ENCODE measurements at regions of chr12 and their contacts with region 1.

Region 1: DNA sequence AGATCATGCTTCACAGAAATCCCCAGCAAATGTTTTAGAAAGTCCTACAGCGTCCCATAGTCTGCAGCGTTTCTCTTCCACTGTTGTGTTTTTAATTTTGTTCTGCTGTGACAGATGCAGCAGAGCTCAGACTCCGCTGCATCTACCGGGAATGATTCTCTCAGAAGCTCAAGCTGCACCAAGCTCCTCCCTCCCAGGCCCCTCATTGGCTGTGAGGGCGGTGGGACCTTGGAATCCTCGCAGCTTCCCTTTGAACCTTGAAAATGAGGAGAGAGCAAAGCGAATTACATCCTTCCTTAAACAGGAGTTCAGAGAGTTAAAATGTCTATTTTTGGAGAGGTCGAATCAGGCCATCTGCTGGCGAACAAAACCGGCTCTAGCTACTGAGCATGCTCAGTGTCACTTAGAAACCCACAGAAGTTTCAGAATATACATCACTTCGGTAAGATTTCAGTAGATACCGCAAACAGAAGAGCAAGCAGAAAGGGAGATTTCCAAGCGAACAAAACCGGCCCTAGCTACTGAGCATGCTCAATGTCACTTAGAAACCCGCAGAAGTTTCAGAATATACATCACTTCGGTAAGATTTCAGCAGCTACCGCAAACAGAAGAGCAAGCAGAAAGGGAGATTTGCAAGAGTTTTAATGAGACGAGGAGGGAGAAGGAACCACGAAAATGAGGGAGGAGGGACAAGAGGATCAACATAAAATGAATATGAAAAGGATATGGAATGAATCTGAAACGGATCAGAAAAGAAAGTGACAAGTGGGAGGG is at the start of gene ABCD2:
- DNase-seq: peak; percentile 45 to 94 (median 61)
- ATAC-seq: peak; percentile 84
- H3K4me3 ChIP-seq: peak within 1 kb of the TSS; percentile 68
- H3K4me3 Mint-ChIP-seq: no peak within 1 kb of the TSS
- H3K27ac ChIP-seq: peak within 1 kb of the TSS; percentile 74 to 89
- H3K27ac Mint-ChIP-seq: no peak within 1 kb of the TSS
- H3K4me1 ChIP-seq: peaks cover 22% of the 10 kb centered on the region
- H3K4me1 Mint-ChIP-seq: peaks cover 35% of the 10 kb centered on the region
- H3K27me3 ChIP-seq: no peaks in the 10 kb centered on the region
- H3K27me3 Mint-ChIP-seq: no peaks in the 10 kb centered on the region
- CTCF ChIP-seq: no peak
- total RNA-seq, gene ABCD2: 1.6 to 2.2 TPM

Region 2: GRCh38 chr12:39510001-39510400 is 109.8 kb before region 1 on chr12:
- CTCF ChIA-PET with region 1: no interaction called
- POLR2A ChIA-PET with region 1: no interaction called
- intact Hi-C with region 1: no loop called
- DNase-seq: no peak
- ATAC-seq: no peak
- H3K4me3 ChIP-seq: no peak overlapping the region
- H3K4me3 Mint-ChIP-seq: no peak overlapping the region
- H3K27ac ChIP-seq: no peak overlapping the region
- H3K27ac Mint-ChIP-seq: no peak overlapping the region
- H3K4me1 ChIP-seq: no peaks in the 10 kb centered on the region
- H3K4me1 Mint-ChIP-seq: no peaks in the 10 kb centered on the region
- H3K27me3 ChIP-seq: no peaks in the 10 kb centered on the region
- H3K27me3 Mint-ChIP-seq: no peaks in the 10 kb centered on the region
- CTCF ChIP-seq: no peak

Region 3: GRCh38 chr12:39638178-39638577 is 18.3 kb after region 1 on chr12:
- CTCF ChIA-PET with region 1: interaction called, 5 read pairs
- POLR2A ChIA-PET with region 1: interaction called, 13 read pairs
- intact Hi-C with region 1: no loop called
- DNase-seq: no peak
- ATAC-seq: no peak
- H3K4me3 ChIP-seq: no peak overlapping the region
- H3K4me3 Mint-ChIP-seq: no peak overlapping the region
- H3K27ac ChIP-seq: no peak overlapping the region
- H3K27ac Mint-ChIP-seq: no peak overlapping the region
- H3K4me1 ChIP-seq: no peaks in the 10 kb centered on the region
- H3K4me1 Mint-ChIP-seq: no peaks in the 10 kb centered on the region
- H3K27me3 ChIP-seq: no peaks in the 10 kb centered on the region
- H3K27me3 Mint-ChIP-seq: no peaks in the 10 kb centered on the region
- CTCF ChIP-seq: no peak

Region 4: DNA sequence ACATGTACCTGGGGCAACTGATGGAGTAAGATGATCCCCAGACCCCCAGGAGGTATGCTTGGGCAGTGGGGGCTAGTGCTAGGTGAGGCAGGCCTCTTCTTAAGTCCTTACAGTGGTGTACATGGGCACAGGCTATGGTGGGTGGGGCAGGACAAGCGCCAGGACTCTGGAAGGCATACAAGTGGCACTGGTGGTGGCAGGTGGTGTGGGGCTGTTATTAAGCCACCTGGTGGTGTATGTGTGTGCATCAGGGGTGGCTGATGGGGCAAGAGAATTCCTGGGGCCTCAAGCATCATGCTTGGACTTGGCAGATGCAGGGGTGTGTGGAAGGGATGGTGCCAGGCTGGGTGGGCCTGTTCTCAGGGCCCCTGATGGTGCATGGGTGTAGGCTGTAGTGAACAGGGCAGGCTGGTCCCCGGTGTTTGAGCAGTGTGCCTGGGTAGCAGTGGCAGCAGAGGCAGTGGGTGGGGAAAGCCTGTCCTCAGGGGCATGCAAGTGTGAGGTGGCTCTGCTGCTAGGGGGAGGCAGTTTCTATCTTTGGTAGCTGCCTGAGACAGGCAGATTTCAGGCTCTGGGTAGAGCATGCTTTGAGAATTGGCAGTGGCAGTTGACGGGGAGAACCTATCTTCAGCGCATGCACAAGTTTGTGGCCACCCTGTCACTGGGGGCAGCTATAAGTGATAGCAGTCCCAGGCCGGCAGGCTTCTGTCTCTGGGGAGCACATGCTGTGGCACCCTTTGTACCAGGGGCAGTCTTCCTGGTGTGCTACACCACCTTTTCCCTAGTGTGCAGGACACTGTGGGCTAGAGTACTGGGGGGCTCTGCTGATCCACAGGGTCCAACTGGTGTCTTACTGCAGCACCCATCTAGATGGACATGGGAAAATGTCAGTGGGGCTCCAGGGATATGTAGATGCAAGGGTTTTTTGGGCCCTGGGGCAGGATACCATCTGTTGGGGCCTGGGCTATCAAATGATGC is 52.3 kb after region 1 on chr12:
- CTCF ChIA-PET with region 1: no interaction called
- POLR2A ChIA-PET with region 1: interaction called, 11 read pairs
- intact Hi-C with region 1: no loop called
- DNase-seq: no peak
- ATAC-seq: no peak
- H3K4me3 ChIP-seq: no peak overlapping the region
- H3K4me3 Mint-ChIP-seq: no peak overlapping the region
- H3K27ac ChIP-seq: no peak overlapping the region
- H3K27ac Mint-ChIP-seq: no peak overlapping the region
- H3K4me1 ChIP-seq: peaks cover 39% of the 10 kb centered on the region
- H3K4me1 Mint-ChIP-seq: peaks cover 41% of the 10 kb centered on the region
- H3K27me3 ChIP-seq: no peaks in the 10 kb centered on the region
- H3K27me3 Mint-ChIP-seq: no peaks in the 10 kb centered on the region
- CTCF ChIP-seq: no peak

Region 5: GRCh38 chr12:39682689-39683477 is 63.0 kb after region 1 on chr12:
- CTCF ChIA-PET with region 1: interaction called, 4 read pairs
- POLR2A ChIA-PET with region 1: interaction called, 20 read pairs
- intact Hi-C with region 1: loop called (anchors 5 to 10 kb)
- DNase-seq: peak in 3 of 14 experiments; percentile 59 to 84 (median 65)
- ATAC-seq: peak; percentile 71
- H3K4me3 ChIP-seq: peak overlapping the region; percentile 32
- H3K4me3 Mint-ChIP-seq: peak overlapping the region; percentile 88
- H3K27ac ChIP-seq: peak overlapping the region; percentile 46 to 85
- H3K27ac Mint-ChIP-seq: peak overlapping the region; percentile 97
- H3K4me1 ChIP-seq: peaks cover 18% of the 10 kb centered on the region
- H3K4me1 Mint-ChIP-seq: peaks cover 34% of the 10 kb centered on the region
- H3K27me3 ChIP-seq: no peaks in the 10 kb centered on the region
- H3K27me3 Mint-ChIP-seq: no peaks in the 10 kb centered on the region
- CTCF ChIP-seq: no peak

Region 6: DNA sequence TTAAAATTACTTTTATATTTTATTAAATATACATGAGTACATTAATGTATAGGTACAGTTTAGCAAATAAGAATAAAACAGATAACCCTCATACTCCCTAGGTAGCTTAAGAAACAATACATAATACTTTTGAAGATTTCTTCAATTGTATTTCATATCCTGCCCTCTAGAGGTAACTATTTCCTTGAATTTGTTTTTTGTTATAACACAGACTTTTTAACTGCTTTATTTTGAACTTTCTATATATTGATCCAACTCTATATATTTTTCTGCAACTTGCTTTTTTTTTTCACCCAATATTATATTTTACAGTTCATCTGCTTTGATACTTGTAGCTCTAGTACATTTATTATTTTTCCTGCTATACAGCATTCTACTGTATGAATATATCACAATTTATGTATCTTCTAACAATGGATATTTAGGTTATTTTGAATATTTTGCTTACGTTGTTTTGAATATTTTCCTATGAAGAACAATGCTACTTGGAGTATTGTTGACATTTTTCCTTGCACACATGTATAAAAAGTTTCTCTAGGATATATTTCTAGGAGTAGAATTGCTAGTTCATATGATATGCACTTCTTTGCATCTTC is 72.5 kb after region 1 on chr12:
- CTCF ChIA-PET with region 1: interaction called, 7 read pairs
- POLR2A ChIA-PET with region 1: interaction called, 20 read pairs
- intact Hi-C with region 1: loop called (anchors 2 to 10 kb)
- DNase-seq: peak in 3 of 14 experiments; percentile 32 to 62 (median 33)
- ATAC-seq: peak; percentile 37
- H3K4me3 ChIP-seq: no peak overlapping the region
- H3K4me3 Mint-ChIP-seq: no peak overlapping the region
- H3K27ac ChIP-seq: no peak overlapping the region
- H3K27ac Mint-ChIP-seq: no peak overlapping the region
- H3K4me1 ChIP-seq: no peaks in the 10 kb centered on the region
- H3K4me1 Mint-ChIP-seq: peaks cover 4% of the 10 kb centered on the region
- H3K27me3 ChIP-seq: no peaks in the 10 kb centered on the region
- H3K27me3 Mint-ChIP-seq: peaks cover 11% of the 10 kb centered on the region
- CTCF ChIP-seq: peak; percentile 76

Region 7: DNA sequence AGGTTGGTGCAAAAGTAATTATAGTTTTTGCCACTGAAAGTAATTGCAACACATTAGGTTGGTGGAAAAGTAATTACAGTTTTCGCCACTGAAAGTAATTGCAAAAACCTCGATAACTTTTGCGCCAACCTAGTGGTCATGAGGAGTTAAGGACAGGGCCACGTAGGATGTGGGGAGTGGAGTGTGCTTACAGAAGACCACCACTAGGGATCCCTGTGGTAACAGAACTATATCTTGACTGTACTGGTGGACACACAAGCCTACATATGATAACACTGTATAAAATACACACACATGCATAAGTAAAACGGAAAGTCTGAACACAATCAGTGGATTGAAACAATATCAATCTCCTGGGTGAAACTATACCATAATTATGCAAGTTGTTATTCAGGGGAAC is 187.2 kb after region 1 on chr12:
- CTCF ChIA-PET with region 1: no interaction called
- POLR2A ChIA-PET with region 1: no interaction called
- intact Hi-C with region 1: no loop called
- DNase-seq: no peak
- ATAC-seq: no peak
- H3K4me3 ChIP-seq: no peak overlapping the region
- H3K4me3 Mint-ChIP-seq: no peak overlapping the region
- H3K27ac ChIP-seq: no peak overlapping the region
- H3K27ac Mint-ChIP-seq: no peak overlapping the region
- H3K4me1 ChIP-seq: no peaks in the 10 kb centered on the region
- H3K4me1 Mint-ChIP-seq: no peaks in the 10 kb centered on the region
- H3K27me3 ChIP-seq: no peaks in the 10 kb centered on the region
- H3K27me3 Mint-ChIP-seq: no peaks in the 10 kb centered on the region
- CTCF ChIP-seq: no peak